GM23248 (cell line): ENCODE measurements at regions of chr16 and their contacts with region 1.

Region 1: GRCh38 chr16:88527186-88527936 is 42.8 kb upstream of the ZC3H18 start:
- DNase-seq: peak; percentile 74
- H3K4me3 ChIP-seq: no peak overlapping the region
- H3K27ac ChIP-seq: no peak overlapping the region
- H3K4me1 ChIP-seq: no peaks in the 10 kb centered on the region
- H3K27me3 ChIP-seq: no peaks in the 10 kb centered on the region

Region 2: GRCh38 chr16:88452482-88453216 is 74.7 kb before region 1 on chr16:
- in situ Hi-C with region 1: loop called (anchors 10 kb)
- DNase-seq: peak; percentile 96
- H3K4me3 ChIP-seq: peak overlapping the region; percentile 79
- H3K27ac ChIP-seq: no peak overlapping the region
- H3K4me1 ChIP-seq: no peaks in the 10 kb centered on the region
- H3K27me3 ChIP-seq: no peaks in the 10 kb centered on the region

Region 3: GRCh38 chr16:88941913-88942909 is 414.9 kb after region 1 on chr16:
- in situ Hi-C with region 1: no loop called
- DNase-seq: peak; percentile 50
- H3K4me3 ChIP-seq: no peak overlapping the region
- H3K27ac ChIP-seq: no peak overlapping the region
- H3K4me1 ChIP-seq: no peaks in the 10 kb centered on the region
- H3K27me3 ChIP-seq: peaks cover 62% of the 10 kb centered on the region